SK-N-SH (cell line): ENCODE measurements at regions of chr9 and their contacts with region 1.

Region 1: DNA sequence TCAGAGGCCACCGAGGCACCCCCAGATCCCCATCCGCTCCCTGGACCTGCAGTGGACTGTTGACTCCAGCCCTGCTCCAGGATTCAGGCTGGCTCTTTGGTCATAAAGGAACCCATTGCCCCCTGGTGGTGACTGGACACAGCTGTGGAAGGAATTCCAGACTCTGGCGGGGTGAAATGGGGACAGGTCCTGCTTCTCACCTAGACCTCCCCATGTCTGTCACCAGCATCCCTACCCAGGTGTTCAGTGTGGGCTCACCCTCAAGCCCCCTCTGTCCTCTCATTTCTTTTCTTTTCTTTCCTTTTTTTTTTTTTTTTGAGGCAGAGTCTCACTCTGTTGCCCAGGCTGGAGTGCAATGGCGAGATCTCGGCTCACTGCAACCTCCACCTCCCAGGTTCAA is 25.5 kb upstream of the STXBP1 start:
- DNase-seq: peak; percentile 87
- H3K4me3 ChIP-seq: no peak overlapping the region; a peak in 1 of 4 replicates
- H3K27ac ChIP-seq: no peak overlapping the region
- H3K4me1 ChIP-seq: no peaks in the 10 kb centered on the region; a peak in 1 of 4 replicates
- H3K27me3 ChIP-seq: no peaks in the 10 kb centered on the region
- CTCF ChIP-seq: peak; percentile 87
- EP300 ChIP-seq: no peak
- RAD21 ChIP-seq: peak; percentile 93

Region 2: GRCh38 chr9:127396808-127397497 is 189.6 kb before region 1 on chr9 and contains the start of gene SLC2A8:
- CTCF ChIA-PET with region 1: no interaction called
- POLR2A ChIA-PET with region 1: no interaction called
- DNase-seq: peak; percentile 96
- H3K4me3 ChIP-seq: peak within 1 kb of the TSS; percentile 80 to 81
- H3K27ac ChIP-seq: peak within 1 kb of the TSS; percentile 57 to 67
- H3K4me1 ChIP-seq: peaks cover 7 to 18% of the 10 kb centered on the region in 2 experiments; a peak in 1 of 4 replicates
- H3K27me3 ChIP-seq: no peaks in the 10 kb centered on the region
- CTCF ChIP-seq: peak; percentile 30
- EP300 ChIP-seq: no peak
- RAD21 ChIP-seq: no peak
- polyA plus RNA-seq, gene SLC2A8: 15.1 and 18.7 TPM in 2 replicates

Region 3: DNA sequence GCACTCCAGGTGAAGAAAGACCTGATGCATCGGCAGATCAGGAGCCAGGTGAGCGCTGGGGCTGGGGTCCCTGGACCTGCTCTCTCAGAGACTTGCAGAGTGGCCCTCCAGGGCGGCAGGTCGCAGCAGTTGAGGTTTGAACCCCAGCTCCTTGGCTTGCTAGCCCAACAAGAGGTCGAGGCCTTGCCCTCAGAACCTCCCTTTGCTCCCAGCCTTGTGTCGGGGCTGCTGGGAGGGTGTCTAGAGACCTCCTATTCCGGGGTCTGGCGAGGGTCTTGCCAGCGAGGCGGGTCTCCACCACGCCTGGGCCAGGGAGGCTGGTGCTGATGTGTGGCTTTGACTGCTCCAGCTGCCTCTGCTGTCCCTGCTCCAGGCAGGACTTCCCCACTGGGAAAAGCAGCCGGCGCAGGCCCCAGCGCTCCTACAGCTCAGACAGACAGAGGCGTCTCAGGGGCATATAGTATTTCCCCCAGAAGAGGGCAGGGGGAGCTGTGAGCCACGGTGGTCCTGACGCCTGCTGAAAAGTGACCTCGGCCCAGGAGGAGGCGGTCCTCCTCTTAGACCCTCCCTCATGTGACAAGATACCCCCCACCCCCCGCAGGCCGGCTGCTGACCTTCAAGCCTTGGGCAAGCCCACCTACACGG is 96.9 kb before region 1 on chr9:
- CTCF ChIA-PET with region 1: interaction called, 11 read pairs
- POLR2A ChIA-PET with region 1: no interaction called
- DNase-seq: peak; percentile 71
- H3K4me3 ChIP-seq: no peak overlapping the region
- H3K27ac ChIP-seq: no peak overlapping the region
- H3K4me1 ChIP-seq: no peaks in the 10 kb centered on the region
- H3K27me3 ChIP-seq: no peaks in the 10 kb centered on the region
- CTCF ChIP-seq: 0 out of 2 replicates have a peak, but pooled peaks have one; percentile 14
- EP300 ChIP-seq: no peak
- RAD21 ChIP-seq: peak; percentile 24

Region 4: DNA sequence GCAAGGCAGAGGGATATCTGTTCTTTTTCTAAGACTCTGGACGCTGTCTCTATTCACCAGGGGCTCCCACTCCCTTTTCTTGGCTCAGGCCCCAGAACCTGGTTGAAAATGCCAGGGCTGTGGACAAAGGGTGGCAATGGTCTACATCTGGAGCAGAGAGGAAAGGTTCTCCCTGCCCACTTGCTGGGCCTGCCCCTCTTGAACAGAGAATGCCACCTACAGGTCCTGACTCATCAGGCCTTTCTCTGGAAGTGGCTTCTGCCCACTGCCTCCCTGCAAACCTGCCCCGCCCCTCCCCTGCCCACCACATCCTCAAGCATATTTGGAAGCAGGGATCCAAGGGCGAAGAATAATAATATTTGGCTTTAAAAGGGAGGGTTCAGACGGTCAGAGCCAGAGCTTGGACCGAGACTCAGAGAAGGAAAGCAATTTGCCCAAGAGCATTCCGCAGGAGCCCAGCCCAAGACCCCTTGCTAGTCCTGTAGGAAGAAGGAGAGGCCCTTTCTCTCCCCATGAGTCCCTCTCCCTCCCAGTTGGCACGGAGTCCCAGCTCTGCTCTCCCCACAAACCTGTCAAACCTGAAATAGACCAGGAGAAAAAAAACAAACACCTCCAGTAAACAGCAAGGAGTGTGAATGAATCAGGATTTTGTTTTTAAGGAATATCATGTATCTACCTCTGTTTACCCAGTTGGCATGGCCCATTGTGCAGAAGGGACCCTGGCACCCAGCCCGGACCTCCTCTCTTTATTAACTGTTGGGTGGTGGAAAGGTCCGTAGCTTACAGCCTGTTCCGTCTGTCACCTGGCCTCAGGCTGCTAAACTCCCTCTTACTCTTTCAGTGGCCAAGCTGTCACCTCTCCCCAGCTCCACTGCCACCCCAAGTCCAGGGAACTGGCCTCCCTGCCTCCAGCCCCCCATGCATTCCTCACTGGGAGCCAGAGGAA is 12.2 kb before region 1 on chr9:
- CTCF ChIA-PET with region 1: interaction called, 16 read pairs
- POLR2A ChIA-PET with region 1: no interaction called
- DNase-seq: no peak
- H3K4me3 ChIP-seq: 0 out of 4 replicates have a peak overlapping the region, but pooled peaks of 1 of the 2 experiments have one; percentile 1
- H3K27ac ChIP-seq: peak overlapping the region; percentile 51 to 68; a peak in 3 of 4 replicates
- H3K4me1 ChIP-seq: peaks cover 22 to 24% of the 10 kb centered on the region in 2 experiments; a peak in 3 of 4 replicates
- H3K27me3 ChIP-seq: no peaks in the 10 kb centered on the region
- CTCF ChIP-seq: no peak
- EP300 ChIP-seq: no peak
- RAD21 ChIP-seq: 0 out of 2 replicates have a peak, but pooled peaks have one; percentile 18

Region 5: GRCh38 chr9:127611899-127612790 is 25.6 kb after region 1 on chr9 and contains the start of gene STXBP1:
- CTCF ChIA-PET with region 1: interaction called, 22 read pairs
- POLR2A ChIA-PET with region 1: no interaction called
- DNase-seq: peak; percentile 98
- H3K4me3 ChIP-seq: peak within 1 kb of the TSS; percentile 83 to 89
- H3K27ac ChIP-seq: peak within 1 kb of the TSS; percentile 57 to 92; a peak in 3 of 4 replicates
- H3K4me1 ChIP-seq: peaks cover 0 to 22% of the 10 kb centered on the region in 2 experiments; a peak in 2 of 4 replicates
- H3K27me3 ChIP-seq: no peaks in the 10 kb centered on the region
- CTCF ChIP-seq: 0 out of 2 replicates have a peak, but pooled peaks have one; percentile 17
- EP300 ChIP-seq: no peak
- RAD21 ChIP-seq: no peak
- polyA plus RNA-seq, gene STXBP1: 33.0 and 44.3 TPM in 2 replicates

Region 6: DNA sequence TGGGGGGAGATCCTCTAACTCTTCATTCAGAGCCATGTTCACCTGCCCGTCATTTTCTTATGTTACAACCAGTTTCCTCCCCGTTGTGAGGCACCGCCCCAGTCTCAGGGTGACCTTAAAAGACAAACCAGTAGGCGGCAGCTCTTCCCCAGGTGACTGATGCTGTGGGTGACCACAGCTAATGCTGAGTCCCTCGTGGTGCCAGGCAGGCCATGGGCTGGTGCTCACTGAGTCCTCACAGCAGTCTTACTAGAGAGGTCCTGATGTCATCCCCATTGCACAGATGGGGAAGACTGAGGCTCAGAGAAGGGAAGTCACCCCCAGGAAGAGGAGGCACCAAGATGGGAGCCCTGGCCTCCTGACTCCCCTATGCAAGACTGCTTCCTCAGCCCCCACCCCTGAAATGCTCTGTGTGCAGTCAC is 121.2 kb after region 1 on chr9:
- CTCF ChIA-PET with region 1: interaction called, 14 read pairs
- POLR2A ChIA-PET with region 1: no interaction called
- DNase-seq: no peak
- H3K4me3 ChIP-seq: no peak overlapping the region
- H3K27ac ChIP-seq: no peak overlapping the region
- H3K4me1 ChIP-seq: peaks cover 0 to 25% of the 10 kb centered on the region in 2 experiments; a peak in 1 of 4 replicates
- H3K27me3 ChIP-seq: no peaks in the 10 kb centered on the region
- CTCF ChIP-seq: no peak
- EP300 ChIP-seq: no peak
- RAD21 ChIP-seq: no peak

Region 7: DNA sequence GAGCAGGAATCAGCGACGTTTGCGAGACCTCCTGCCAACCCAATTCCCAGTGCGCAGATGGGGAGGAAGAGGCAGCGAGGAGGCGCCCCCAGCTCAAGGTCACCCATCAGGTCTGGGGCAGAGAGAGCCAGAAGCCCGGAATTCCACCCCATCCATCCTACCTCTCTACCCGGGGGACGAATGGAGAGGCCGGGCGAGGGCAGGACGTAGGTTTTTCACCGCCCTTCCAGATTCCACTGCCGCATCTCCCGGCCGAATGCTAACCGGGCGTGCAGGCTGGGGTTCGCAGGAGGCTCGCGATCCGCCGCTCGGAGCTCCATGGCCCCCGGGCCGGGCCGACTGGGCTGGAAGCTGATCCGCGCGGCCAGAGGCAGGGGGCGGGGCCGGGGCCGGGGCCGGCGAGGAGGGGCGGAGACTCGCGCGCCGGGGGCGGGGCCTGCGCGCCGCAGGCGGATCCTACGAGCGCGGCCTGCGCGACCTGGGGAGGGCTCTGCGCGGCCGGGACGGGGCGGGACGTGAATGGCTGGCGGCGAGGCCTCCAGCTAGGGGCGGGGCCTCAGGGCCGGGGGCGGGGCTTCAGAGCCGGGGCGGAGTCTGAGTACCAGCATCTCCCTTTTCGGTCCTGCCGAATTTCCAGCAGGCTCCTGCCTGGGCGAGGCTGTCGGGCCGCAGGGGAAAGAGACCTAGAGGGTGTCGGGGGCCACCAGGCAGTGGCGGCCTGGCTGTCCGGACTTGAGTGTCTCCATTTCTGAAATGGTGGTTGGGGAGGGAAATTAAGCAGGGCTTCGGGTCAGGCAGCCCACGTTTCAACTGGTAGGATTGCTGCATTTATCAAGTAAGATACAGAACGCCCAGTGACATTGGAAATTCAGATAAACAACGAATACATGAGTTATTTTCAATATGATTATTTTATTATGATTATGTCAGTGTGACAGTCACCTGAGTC is 330.4 kb after region 1 on chr9 and contains the start of gene ST6GALNAC4:
- CTCF ChIA-PET with region 1: interaction called, 10 read pairs
- POLR2A ChIA-PET with region 1: no interaction called
- DNase-seq: peak; percentile 98
- H3K4me3 ChIP-seq: peak within 1 kb of the TSS; percentile 56 to 84
- H3K27ac ChIP-seq: peak within 1 kb of the TSS; percentile 58 to 95
- H3K4me1 ChIP-seq: peaks cover 20 to 35% of the 10 kb centered on the region in 2 experiments; a peak in 3 of 4 replicates
- H3K27me3 ChIP-seq: no peaks in the 10 kb centered on the region
- CTCF ChIP-seq: no peak
- EP300 ChIP-seq: no peak
- RAD21 ChIP-seq: no peak
- polyA plus RNA-seq, gene ST6GALNAC4: 28.4 and 30.2 TPM in 2 replicates